ENCODE measurements at regions of chr13 and their contacts with region 1.

Region 1: GRCh38 chr13:44969551-44970484 is 19.5 kb downstream of the NUFIP1 start:
- DNase-seq: peak in 1 of 2 donors; percentile 78
- H3K4me3 ChIP-seq: no peak overlapping the region
- H3K27ac ChIP-seq: peak overlapping the region in 2 of 5 donors; percentile 15 to 57
- H3K4me1 ChIP-seq: peaks cover 0 to 57% (median 33%) of the 10 kb centered on the region in 4 donors
- H3K27me3 ChIP-seq: no peaks in the 10 kb centered on the region
- CTCF ChIP-seq: peak in 5 of 7 experiments; percentile 65 to 87 (median 73)
- EP300 ChIP-seq: no peak
- POLR2A ChIP-seq: no peak

Region 2: DNA sequence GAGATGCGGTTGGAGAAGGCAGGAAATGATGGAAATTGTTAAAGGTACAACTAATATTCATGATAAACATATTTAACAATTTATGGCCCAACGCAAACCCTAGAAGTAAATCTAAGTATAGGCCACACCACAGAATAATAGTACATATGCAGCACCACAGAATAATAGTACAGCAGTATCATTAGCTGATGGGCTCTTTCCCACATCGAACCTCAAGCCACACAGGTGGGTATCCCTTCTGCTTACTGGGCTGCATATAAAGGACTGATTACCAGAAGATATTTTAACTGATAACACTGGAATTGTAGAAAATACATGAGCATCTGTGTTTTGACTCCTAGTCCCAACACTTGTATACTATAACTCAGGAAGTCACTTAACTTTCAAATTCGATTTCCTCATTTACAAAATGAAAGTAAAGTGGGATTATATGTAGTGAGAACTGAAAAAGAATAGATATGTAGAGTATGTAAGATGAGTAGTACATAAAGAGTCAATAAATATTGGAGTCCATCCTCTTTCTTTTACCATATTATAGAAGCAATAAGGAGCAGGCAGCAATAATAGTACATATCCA is 485.2 kb before region 1 on chr13:
- intact Hi-C with region 1: loop called (anchors 10 kb)
- DNase-seq: no peak
- H3K4me3 ChIP-seq: no peak overlapping the region
- H3K27ac ChIP-seq: no peak overlapping the region
- H3K4me1 ChIP-seq: peaks cover 0 to 19% (median 2%) of the 10 kb centered on the region in 4 donors
- H3K27me3 ChIP-seq: no peaks in the 10 kb centered on the region
- CTCF ChIP-seq: no peak
- EP300 ChIP-seq: no peak
- POLR2A ChIP-seq: no peak

Region 3: GRCh38 chr13:44904967-44905366 is 64.9 kb before region 1 on chr13:
- intact Hi-C with region 1: loop called (anchors 10 kb)
- DNase-seq: peak; percentile 52 to 93
- H3K4me3 ChIP-seq: no peak overlapping the region
- H3K27ac ChIP-seq: peak overlapping the region; percentile 67 to 89 (median 72)
- H3K4me1 ChIP-seq: peaks cover 25 to 49% (median 42%) of the 10 kb centered on the region in 4 donors
- H3K27me3 ChIP-seq: no peaks in the 10 kb centered on the region
- CTCF ChIP-seq: no peak
- EP300 ChIP-seq: no peak
- POLR2A ChIP-seq: no peak

Region 4: GRCh38 chr13:45119991-45120864 is 150.4 kb after region 1 on chr13 and contains the start of gene GTF2F2:
- intact Hi-C with region 1: no loop called
- DNase-seq: peak; percentile 91 to 97
- H3K4me3 ChIP-seq: peak within 1 kb of the TSS; percentile 71 to 82 (median 78)
- H3K27ac ChIP-seq: peak within 1 kb of the TSS; percentile 81 to 91 (median 87)
- H3K4me1 ChIP-seq: peaks cover 12 to 39% (median 24%) of the 10 kb centered on the region in 4 donors
- H3K27me3 ChIP-seq: no peaks in the 10 kb centered on the region
- CTCF ChIP-seq: no peak
- EP300 ChIP-seq: no peak
- POLR2A ChIP-seq: peak in 1 of 4 donors; percentile 9
- total RNA-seq, gene GTF2F2: 8.7 to 30.7 (median 16.3) TPM

Region 5: DNA sequence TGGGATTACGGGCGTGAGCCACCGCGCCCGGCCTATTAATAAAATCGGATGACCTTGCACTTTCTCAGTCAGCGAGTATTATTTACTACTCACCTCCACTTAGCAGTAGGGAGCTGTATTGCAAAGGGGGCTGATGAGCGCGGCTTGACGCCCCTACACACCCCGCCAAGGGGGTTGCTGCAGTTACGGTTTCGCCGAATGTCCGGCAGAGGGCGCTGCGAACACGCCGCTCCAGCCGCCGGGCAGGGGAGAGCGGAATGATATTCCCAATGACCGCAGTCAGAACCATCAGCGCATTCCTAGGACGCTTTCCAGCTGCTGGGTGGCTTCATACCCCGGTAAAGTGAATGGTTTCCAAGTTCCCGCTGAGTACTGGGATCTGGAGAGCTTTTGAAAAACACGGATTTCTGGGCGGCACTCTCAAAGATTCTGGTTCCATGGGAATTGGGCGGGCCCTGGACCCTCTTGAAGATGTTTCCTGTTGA is 401.1 kb after region 1 on chr13:
- intact Hi-C with region 1: no loop called
- DNase-seq: peak; percentile 71 to 88
- H3K4me3 ChIP-seq: peak overlapping the region in 2 of 4 donors; percentile 18 to 26
- H3K27ac ChIP-seq: peak overlapping the region in 1 of 5 donors; percentile 42
- H3K4me1 ChIP-seq: peaks cover 16 to 51% (median 24%) of the 10 kb centered on the region in 4 donors
- H3K27me3 ChIP-seq: no peaks in the 10 kb centered on the region
- CTCF ChIP-seq: peak in 5 of 7 experiments; percentile 80 to 99 (median 87)
- EP300 ChIP-seq: no peak
- POLR2A ChIP-seq: no peak